CD4-positive, alpha-beta memory T cell (primary cell): ENCODE measurements at regions of chr19 and their contacts with region 1.

Region 1: DNA sequence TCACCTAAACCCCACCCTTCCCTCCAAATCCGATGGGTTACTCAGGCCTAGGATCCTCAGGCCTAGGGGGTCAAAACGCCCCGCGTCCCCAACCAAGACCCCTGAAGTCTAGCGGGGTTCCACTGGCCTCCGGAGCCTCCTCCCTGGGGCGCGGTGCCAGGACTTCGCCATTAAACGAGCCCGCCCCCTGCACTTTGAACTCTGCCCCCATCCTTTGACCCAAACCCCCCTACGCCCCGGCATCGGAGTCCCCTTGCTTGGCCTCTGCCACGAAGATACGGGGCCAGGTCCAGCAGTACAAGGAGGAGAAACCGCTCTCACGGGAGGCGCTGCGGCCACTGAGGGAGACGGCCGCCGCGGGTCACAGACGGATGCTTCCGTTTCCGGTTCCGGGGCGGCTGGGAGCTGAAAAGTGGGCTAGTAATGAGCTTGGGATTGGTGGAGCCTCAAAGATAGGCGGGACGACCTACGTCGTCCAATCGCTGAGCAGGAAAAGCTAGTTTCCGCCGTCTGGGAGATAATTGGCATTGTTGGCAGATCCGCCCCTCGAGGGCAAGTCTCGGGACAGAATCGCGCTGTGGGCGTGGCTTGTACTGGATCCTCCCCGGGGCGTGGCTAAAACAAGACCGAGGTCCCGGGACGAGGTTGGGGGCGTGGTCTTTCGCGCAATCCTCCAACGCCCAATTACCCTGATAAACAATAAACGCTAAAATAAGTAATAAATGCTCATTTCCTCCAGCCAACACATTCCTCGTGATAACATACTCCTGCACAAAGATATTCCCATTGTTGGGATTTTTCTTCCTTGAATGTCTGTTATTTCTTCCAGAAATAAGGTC is 5.7 kb upstream of the ZNF77 start:
- DNase-seq: peak; percentile 99 to 100 (median 100)
- H3K4me3 ChIP-seq: peak overlapping the region; percentile 62 to 87
- H3K4me3 Mint-ChIP-seq: peak overlapping the region; percentile 93 to 98 (median 96)
- H3K27ac ChIP-seq: peak overlapping the region; percentile 93
- H3K27ac Mint-ChIP-seq: peak overlapping the region; percentile 92 to 100 (median 99)
- H3K4me1 ChIP-seq: peaks cover 22% of the 10 kb centered on the region
- H3K4me1 Mint-ChIP-seq: peaks cover 17 to 35% (median 23%) of the 10 kb centered on the region in 4 donors
- H3K27me3 ChIP-seq: no peaks in the 10 kb centered on the region
- H3K27me3 Mint-ChIP-seq: no peaks in the 10 kb centered on the region

Region 2: DNA sequence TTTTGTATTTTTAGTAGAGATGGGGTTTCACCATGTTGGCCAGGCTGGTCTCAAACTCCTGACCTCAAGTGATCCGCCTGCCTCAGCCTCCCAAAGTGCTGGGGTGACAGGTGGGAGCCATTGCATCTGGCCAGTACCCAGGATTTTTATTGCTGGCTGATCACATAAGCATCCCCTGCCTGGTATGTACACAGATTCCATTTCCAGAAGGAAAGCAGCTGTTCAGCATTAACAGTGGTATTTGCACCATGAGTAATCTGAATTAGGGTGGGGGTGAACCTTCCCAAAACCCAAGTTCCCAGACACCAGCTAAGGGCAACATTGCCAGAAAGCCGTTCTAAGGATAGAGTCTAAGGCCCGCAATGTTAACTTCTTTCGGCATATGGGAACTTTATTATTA is 101.9 kb before region 1 on chr19:
- CTCF ChIA-PET with region 1: no interaction called
- POLR2A ChIA-PET with region 1: no interaction called
- intact Hi-C with region 1: no loop called
- DNase-seq: no peak
- H3K4me3 ChIP-seq: no peak overlapping the region
- H3K4me3 Mint-ChIP-seq: no peak overlapping the region
- H3K27ac ChIP-seq: no peak overlapping the region
- H3K27ac Mint-ChIP-seq: no peak overlapping the region
- H3K4me1 ChIP-seq: peaks cover 12% of the 10 kb centered on the region
- H3K4me1 Mint-ChIP-seq: peaks cover 11 to 30% (median 18%) of the 10 kb centered on the region in 4 donors
- H3K27me3 ChIP-seq: no peaks in the 10 kb centered on the region
- H3K27me3 Mint-ChIP-seq: no peaks in the 10 kb centered on the region

Region 3: GRCh38 chr19:2887391-2887914 is 63.1 kb before region 1 on chr19:
- CTCF ChIA-PET with region 1: interaction called, 7 read pairs
- POLR2A ChIA-PET with region 1: interaction called, 4 read pairs
- intact Hi-C with region 1: loop called (anchors 2 kb)
- DNase-seq: peak in 4 of 5 donors; percentile 20 to 38 (median 27)
- H3K4me3 ChIP-seq: no peak overlapping the region
- H3K4me3 Mint-ChIP-seq: no peak overlapping the region
- H3K27ac ChIP-seq: no peak overlapping the region
- H3K27ac Mint-ChIP-seq: peak overlapping the region in 4 of 7 donors; percentile 2 to 38 (median 32)
- H3K4me1 ChIP-seq: peaks cover 4% of the 10 kb centered on the region
- H3K4me1 Mint-ChIP-seq: peaks cover 7 to 17% (median 9%) of the 10 kb centered on the region in 4 donors
- H3K27me3 ChIP-seq: no peaks in the 10 kb centered on the region
- H3K27me3 Mint-ChIP-seq: peaks cover 0 to 7% of the 10 kb centered on the region in 2 donors

Region 4: GRCh38 chr19:2962045-2962561 is 11.6 kb after region 1 on chr19:
- CTCF ChIA-PET with region 1: interaction called, 17 read pairs
- POLR2A ChIA-PET with region 1: no interaction called
- intact Hi-C with region 1: loop called (anchors 1 kb)
- DNase-seq: peak; percentile 72 to 80 (median 77)
- H3K4me3 ChIP-seq: no peak overlapping the region
- H3K4me3 Mint-ChIP-seq: peak overlapping the region in 2 of 8 donors; percentile 16 to 17
- H3K27ac ChIP-seq: no peak overlapping the region
- H3K27ac Mint-ChIP-seq: peak overlapping the region; percentile 48 to 92 (median 85)
- H3K4me1 ChIP-seq: no peaks in the 10 kb centered on the region
- H3K4me1 Mint-ChIP-seq: peaks cover 4 to 6% (median 5%) of the 10 kb centered on the region in 4 donors
- H3K27me3 ChIP-seq: no peaks in the 10 kb centered on the region
- H3K27me3 Mint-ChIP-seq: no peaks in the 10 kb centered on the region

Region 5: DNA sequence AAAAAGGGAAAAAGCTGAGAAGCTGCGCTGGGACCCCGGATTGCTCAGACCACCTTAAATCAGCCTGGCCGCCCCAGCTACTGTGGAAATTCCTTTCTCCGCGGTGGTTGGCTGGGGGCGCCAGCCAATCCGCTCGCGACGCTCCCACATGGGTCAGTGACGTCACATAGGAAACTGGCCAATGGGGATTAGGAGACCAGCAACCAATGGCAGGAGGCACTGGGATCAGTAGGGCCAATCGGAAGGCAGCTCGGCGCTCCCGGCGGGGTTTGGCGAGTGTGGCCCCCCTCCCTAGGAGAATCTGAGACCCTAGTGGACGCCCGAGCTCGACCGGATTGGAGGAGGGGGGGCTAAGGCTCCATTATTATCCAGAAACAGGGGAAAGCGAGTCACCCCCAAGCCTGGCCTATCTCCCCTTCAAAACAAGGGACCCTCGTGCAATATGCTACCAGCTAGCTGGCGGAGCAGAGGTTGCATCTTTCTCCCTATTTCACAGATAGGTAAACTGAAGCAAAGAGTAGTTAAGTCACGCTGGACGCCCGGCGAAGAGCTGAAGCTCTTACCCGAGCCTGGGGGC is 85.1 kb after region 1 on chr19:
- CTCF ChIA-PET with region 1: interaction called, 16 read pairs
- POLR2A ChIA-PET with region 1: interaction called, 17 read pairs
- intact Hi-C with region 1: loop called (anchors 1 kb)
- DNase-seq: peak; percentile 94 to 97 (median 95)
- H3K4me3 ChIP-seq: peak overlapping the region; percentile 77 to 93
- H3K4me3 Mint-ChIP-seq: peak overlapping the region; percentile 90 to 96 (median 93)
- H3K27ac ChIP-seq: peak overlapping the region; percentile 75
- H3K27ac Mint-ChIP-seq: peak overlapping the region; percentile 95 to 99 (median 98)
- H3K4me1 ChIP-seq: peaks cover 19% of the 10 kb centered on the region
- H3K4me1 Mint-ChIP-seq: peaks cover 18 to 42% (median 28%) of the 10 kb centered on the region in 4 donors
- H3K27me3 ChIP-seq: no peaks in the 10 kb centered on the region
- H3K27me3 Mint-ChIP-seq: peaks cover 0 to 3% of the 10 kb centered on the region in 2 donors

Region 6: GRCh38 chr19:3075895-3076431 is 125.5 kb after region 1 on chr19:
- CTCF ChIA-PET with region 1: interaction called, 15 read pairs
- POLR2A ChIA-PET with region 1: no interaction called
- intact Hi-C with region 1: no loop called
- DNase-seq: peak; percentile 65 to 76 (median 66)
- H3K4me3 ChIP-seq: no peak overlapping the region
- H3K4me3 Mint-ChIP-seq: peak overlapping the region in 2 of 8 donors; percentile 41 to 58
- H3K27ac ChIP-seq: no peak overlapping the region
- H3K27ac Mint-ChIP-seq: peak overlapping the region in 2 of 7 donors; percentile 43 to 68
- H3K4me1 ChIP-seq: peaks cover 7% of the 10 kb centered on the region
- H3K4me1 Mint-ChIP-seq: peaks cover 0 to 10% (median 3%) of the 10 kb centered on the region in 4 donors
- H3K27me3 ChIP-seq: no peaks in the 10 kb centered on the region
- H3K27me3 Mint-ChIP-seq: no peaks in the 10 kb centered on the region

Region 7: DNA sequence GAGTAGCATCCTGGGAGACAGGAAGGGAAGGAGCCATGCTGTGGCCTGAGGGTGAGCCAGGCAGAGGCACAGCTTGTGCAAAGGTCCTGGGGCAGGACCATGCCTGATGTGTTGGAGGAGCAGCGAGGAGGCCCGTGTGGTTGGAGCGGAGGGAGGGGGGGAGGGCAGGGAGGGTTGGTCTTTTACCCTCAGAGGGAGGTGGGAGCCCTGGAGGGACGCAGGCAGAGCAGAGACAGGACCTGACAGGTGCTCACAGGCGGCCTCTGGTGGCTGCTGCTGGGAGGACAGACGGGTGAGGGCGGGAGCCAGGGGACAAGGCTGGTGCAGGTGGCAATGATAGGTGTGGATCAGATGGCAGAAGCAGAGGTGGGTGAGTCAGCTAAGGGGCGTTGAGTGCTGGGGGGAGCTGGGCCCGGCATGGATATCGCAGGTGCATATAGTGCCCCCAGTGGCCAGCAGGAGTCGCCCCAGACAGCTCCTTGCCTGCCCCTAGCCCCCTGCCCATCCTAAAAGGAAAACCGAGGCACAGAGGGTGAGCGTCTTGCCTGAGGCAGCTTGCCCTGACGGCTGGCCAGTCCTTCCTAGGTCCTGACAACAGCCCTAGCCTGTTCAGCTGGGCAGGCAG is 175.5 kb after region 1 on chr19:
- CTCF ChIA-PET with region 1: interaction called, 38 read pairs
- POLR2A ChIA-PET with region 1: interaction called, 4 read pairs
- intact Hi-C with region 1: no loop called
- DNase-seq: peak; percentile 41 to 71 (median 68)
- H3K4me3 ChIP-seq: no peak overlapping the region
- H3K4me3 Mint-ChIP-seq: no peak overlapping the region
- H3K27ac ChIP-seq: no peak overlapping the region
- H3K27ac Mint-ChIP-seq: peak overlapping the region in 2 of 7 donors; percentile 72 to 84
- H3K4me1 ChIP-seq: peaks cover 4% of the 10 kb centered on the region
- H3K4me1 Mint-ChIP-seq: peaks cover 5 to 7% (median 5%) of the 10 kb centered on the region in 4 donors
- H3K27me3 ChIP-seq: no peaks in the 10 kb centered on the region
- H3K27me3 Mint-ChIP-seq: no peaks in the 10 kb centered on the region

Region 8: DNA sequence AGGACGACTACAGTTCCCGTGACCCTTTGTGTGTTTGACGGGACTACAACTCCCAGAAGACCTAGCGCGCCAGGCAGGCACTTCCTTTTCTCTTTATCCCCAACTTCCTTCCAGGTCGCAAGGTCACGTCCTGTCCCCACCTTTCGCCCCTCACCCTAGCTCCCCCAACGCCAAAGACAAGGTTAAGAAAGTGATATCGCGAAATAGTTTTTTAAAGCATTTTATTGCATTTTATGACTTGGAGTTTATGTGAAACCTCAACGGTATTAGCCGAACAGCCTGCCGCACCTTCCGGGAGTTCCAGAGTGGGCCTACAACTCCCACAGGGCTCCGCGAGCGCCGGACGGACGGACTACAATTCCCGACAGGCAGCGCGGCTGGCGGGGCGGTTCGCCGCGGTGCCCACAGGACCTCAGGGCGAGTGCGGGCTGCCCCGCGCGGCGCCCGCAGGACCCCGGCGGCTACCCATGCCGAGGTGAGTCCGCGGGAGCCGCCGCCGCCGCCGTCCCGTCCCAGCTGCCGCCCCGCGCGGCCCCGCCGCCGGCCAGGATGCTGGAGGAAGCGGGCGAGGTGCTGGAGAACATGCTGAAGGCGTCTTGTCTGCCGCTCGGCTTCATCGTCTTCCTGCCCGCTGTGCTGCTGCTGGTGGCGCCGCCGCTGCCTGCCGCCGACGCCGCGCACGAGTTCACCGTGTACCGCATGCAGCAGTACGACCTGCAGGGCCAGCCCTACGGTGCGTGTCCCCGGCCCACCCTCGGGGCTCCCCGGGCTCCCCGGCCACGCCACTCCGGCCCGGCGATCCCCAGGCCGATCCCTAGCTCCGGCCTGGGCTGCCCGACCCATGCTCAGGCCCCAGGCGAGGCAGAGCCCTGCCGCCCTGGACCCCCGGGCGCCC is 235.2 kb after region 1 on chr19 and contains the start of gene NCLN:
- CTCF ChIA-PET with region 1: interaction called, 3 read pairs
- POLR2A ChIA-PET with region 1: interaction called, 16 read pairs
- intact Hi-C with region 1: loop called (anchors 1 kb)
- DNase-seq: peak; percentile 95 to 98 (median 95)
- H3K4me3 ChIP-seq: peak within 1 kb of the TSS; percentile 78 to 88
- H3K4me3 Mint-ChIP-seq: peak within 1 kb of the TSS; percentile 87 to 97 (median 93)
- H3K27ac ChIP-seq: peak within 1 kb of the TSS; percentile 45
- H3K27ac Mint-ChIP-seq: peak within 1 kb of the TSS; percentile 93 to 97 (median 96)
- H3K4me1 ChIP-seq: peaks cover 70% of the 10 kb centered on the region
- H3K4me1 Mint-ChIP-seq: peaks cover 33 to 67% (median 50%) of the 10 kb centered on the region in 4 donors
- H3K27me3 ChIP-seq: no peaks in the 10 kb centered on the region
- H3K27me3 Mint-ChIP-seq: no peaks in the 10 kb centered on the region
- total RNA-seq, gene NCLN: 53.0 to 59.3 TPM